Common myeloid progenitor, CD34-positive (primary cell): ENCODE measurements at regions of chr16 and their contacts with region 1.

Region 1: DNA sequence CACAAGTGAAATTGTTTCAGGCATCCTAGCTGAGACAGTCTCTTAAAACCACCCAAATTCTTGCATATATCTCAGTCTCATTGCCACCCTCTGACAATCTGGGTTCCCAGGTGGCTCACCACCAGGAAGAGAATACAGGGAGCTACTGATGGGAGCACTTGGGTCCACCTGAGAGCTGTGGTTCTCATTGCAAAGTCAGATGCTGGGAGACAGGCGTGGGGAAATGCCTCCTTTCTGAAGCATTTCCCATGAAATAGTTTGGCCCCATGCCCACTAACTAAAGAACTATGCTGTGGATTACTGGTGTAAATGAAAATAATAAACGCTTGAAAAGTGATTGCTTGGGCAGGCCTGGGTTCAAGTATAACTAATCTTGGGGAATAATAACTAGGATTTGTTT is 70.3 kb downstream of the CMC2 start:
- DNase-seq: no peak
- H3K4me3 ChIP-seq: no peak overlapping the region
- H3K27ac ChIP-seq: no peak overlapping the region
- H3K4me1 ChIP-seq: peaks cover 0 to 15% (median 11%) of the 10 kb centered on the region in 4 experiments
- H3K27me3 ChIP-seq: peaks cover 0 to 33% (median 15%) of the 10 kb centered on the region in 5 experiments

Region 2: GRCh38 chr16:79658301-79659033 is 1277.9 kb before region 1 on chr16:
- CTCF ChIA-PET with region 1: no interaction called
- POLR2A ChIA-PET with region 1: no interaction called
- DNase-seq: peak in 1 of 3 donors; percentile 13
- H3K4me3 ChIP-seq: no peak overlapping the region
- H3K27ac ChIP-seq: no peak overlapping the region
- H3K4me1 ChIP-seq: peaks cover 0 to 5% (median 4%) of the 10 kb centered on the region in 4 experiments
- H3K27me3 ChIP-seq: no peaks in the 10 kb centered on the region

Region 3: DNA sequence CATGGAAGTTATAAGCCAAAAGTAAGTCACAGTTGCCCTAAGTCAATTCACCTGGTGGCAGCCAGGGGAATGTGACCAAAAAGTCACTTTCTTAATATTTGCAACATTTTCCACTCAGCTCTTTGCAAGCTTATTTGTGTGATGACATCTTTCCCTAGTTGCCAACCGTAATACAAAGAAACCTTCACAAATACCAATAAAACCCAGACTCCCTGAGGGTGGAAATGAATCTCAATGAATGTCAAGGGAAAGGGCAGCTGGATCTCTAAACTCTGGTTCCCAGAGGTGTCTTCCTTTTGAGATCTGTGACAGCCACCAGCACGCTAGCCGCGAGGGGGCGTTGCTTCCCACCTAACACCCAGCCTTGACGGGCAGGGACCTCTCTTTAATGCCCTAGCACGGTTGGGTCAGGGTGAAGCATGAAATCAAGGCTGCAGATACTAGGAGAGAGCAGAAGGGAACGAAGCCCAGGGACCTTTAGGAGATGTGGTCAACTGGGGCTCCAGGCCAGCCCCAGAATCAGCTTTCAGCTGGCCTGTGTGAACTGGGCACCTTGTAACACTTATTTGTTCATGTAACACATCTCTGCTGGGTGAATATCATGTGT is 11.9 kb before region 1 on chr16:
- CTCF ChIA-PET with region 1: interaction called, 19 read pairs
- POLR2A ChIA-PET with region 1: no interaction called
- DNase-seq: peak; percentile 61 to 71 (median 70)
- H3K4me3 ChIP-seq: no peak overlapping the region
- H3K27ac ChIP-seq: no peak overlapping the region
- H3K4me1 ChIP-seq: no peaks in the 10 kb centered on the region
- H3K27me3 ChIP-seq: peaks cover 0 to 4% (median 0%) of the 10 kb centered on the region in 5 experiments